ENCODE measurements at regions of chr22 and their contacts with region 1.

Region 1: GRCh38 chr22:36162127-36163034 is 1.8 kb upstream of the APOL3 start:
- DNase-seq: no peak
- ATAC-seq: peak; percentile 46
- H3K4me3 Mint-ChIP-seq: peak overlapping the region; percentile 90
- H3K27ac Mint-ChIP-seq: peak overlapping the region; percentile 91
- H3K4me1 Mint-ChIP-seq: peaks cover 79% of the 10 kb centered on the region
- H3K27me3 Mint-ChIP-seq: no peaks in the 10 kb centered on the region

Region 2: GRCh38 chr22:36151006-36151595 is 11.3 kb before region 1 on chr22:
- POLR2A ChIA-PET with region 1: interaction called, 12 read pairs
- DNase-seq: no peak
- ATAC-seq: no peak
- H3K4me3 Mint-ChIP-seq: no peak overlapping the region
- H3K27ac Mint-ChIP-seq: peak overlapping the region; percentile 61
- H3K4me1 Mint-ChIP-seq: peaks cover 54% of the 10 kb centered on the region
- H3K27me3 Mint-ChIP-seq: no peaks in the 10 kb centered on the region

Region 3: DNA sequence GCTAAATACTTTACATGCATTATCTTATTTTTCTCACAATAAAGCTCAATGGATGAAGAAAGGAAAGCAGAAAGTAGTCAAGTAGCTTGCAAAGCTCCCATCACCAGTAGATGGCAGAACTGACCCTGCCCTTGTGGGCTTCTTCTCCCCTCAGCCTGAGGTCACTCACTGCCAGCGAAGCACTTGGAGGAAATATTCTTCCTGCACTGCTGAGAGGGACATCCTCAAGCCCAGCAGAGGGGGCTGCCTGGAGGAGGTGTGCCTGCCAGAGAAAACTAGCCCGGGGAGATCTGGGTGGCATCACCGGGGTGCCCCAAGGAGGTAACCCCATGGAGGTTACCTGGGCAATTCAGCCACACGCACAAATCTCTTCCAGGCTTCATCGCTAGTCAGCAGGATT is 32.6 kb after region 1 on chr22:
- POLR2A ChIA-PET with region 1: no interaction called
- DNase-seq: peak; percentile 47
- ATAC-seq: peak; percentile 66
- H3K4me3 Mint-ChIP-seq: no peak overlapping the region
- H3K27ac Mint-ChIP-seq: no peak overlapping the region
- H3K4me1 Mint-ChIP-seq: peaks cover 33% of the 10 kb centered on the region
- H3K27me3 Mint-ChIP-seq: no peaks in the 10 kb centered on the region